WTC11 (cell line): ENCODE measurements at regions of chr6 and their contacts with region 1.

Region 1: GRCh38 chr6:31366693-31367470 is 9.9 kb upstream of the HLA-B start:
- DNase-seq: peak; percentile 91
- ATAC-seq: peak; percentile 96
- H3K4me3 Mint-ChIP-seq: peak overlapping the region; percentile 63
- H3K27ac Mint-ChIP-seq: no peak overlapping the region
- H3K4me1 Mint-ChIP-seq: peaks cover 4% of the 10 kb centered on the region; the same call in 1 of the 2 replicates
- H3K27me3 Mint-ChIP-seq: peaks cover 72% of the 10 kb centered on the region
- CTCF ChIP-seq: peak; percentile 88

Region 2: GRCh38 chr6:31197559-31198305 is 169.2 kb before region 1 on chr6:
- CTCF ChIA-PET with region 1: interaction called, 60 read pairs
- POLR2A ChIA-PET with region 1: no interaction called
- DNase-seq: peak; percentile 70
- ATAC-seq: peak; percentile 42
- H3K4me3 Mint-ChIP-seq: peak overlapping the region; percentile 83
- H3K27ac Mint-ChIP-seq: no peak overlapping the region
- H3K4me1 Mint-ChIP-seq: peaks cover 6% of the 10 kb centered on the region
- H3K27me3 Mint-ChIP-seq: no peaks in the 10 kb centered on the region; the same call in 1 of the 2 replicates
- CTCF ChIP-seq: no peak

Region 3: DNA sequence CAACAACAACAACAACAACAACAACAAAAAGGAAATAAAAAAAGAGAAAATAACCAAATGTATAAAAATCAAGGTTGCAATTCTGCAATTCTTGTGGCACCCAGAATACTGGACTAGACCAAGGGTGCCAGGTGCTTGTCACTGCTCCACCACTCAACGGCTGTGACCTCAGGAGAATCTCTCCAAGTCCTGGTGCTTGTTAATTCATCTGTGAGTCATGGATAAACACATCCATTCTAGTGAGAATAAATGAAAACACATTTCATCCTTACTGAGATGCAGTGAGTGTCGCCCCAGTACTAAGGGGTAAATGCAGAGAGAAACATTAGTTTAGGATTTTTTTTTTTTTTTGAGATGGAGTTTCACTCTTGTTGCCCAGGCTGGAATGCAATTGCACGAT is 127.0 kb before region 1 on chr6:
- CTCF ChIA-PET with region 1: interaction called, 12 read pairs
- POLR2A ChIA-PET with region 1: no interaction called
- DNase-seq: no peak
- ATAC-seq: no peak
- H3K4me3 Mint-ChIP-seq: no peak overlapping the region
- H3K27ac Mint-ChIP-seq: no peak overlapping the region
- H3K4me1 Mint-ChIP-seq: no peaks in the 10 kb centered on the region
- H3K27me3 Mint-ChIP-seq: peaks cover 8% of the 10 kb centered on the region
- CTCF ChIP-seq: no peak

Region 4: GRCh38 chr6:31293343-31293742 is 73.5 kb before region 1 on chr6:
- CTCF ChIA-PET with region 1: interaction called, 10 read pairs
- POLR2A ChIA-PET with region 1: no interaction called
- DNase-seq: no peak
- ATAC-seq: no peak
- H3K4me3 Mint-ChIP-seq: no peak overlapping the region
- H3K27ac Mint-ChIP-seq: no peak overlapping the region
- H3K4me1 Mint-ChIP-seq: no peaks in the 10 kb centered on the region
- H3K27me3 Mint-ChIP-seq: peaks cover 32% of the 10 kb centered on the region
- CTCF ChIP-seq: no peak

Region 5: GRCh38 chr6:31345026-31345730 is 21.7 kb before region 1 on chr6:
- CTCF ChIA-PET with region 1: interaction called, 11 read pairs
- POLR2A ChIA-PET with region 1: no interaction called
- DNase-seq: no peak
- ATAC-seq: peak; percentile 41; the same call in 1 of the 2 replicates
- H3K4me3 Mint-ChIP-seq: no peak overlapping the region
- H3K27ac Mint-ChIP-seq: no peak overlapping the region
- H3K4me1 Mint-ChIP-seq: peaks cover 22% of the 10 kb centered on the region
- H3K27me3 Mint-ChIP-seq: peaks cover 12% of the 10 kb centered on the region
- CTCF ChIP-seq: no peak

Region 6: DNA sequence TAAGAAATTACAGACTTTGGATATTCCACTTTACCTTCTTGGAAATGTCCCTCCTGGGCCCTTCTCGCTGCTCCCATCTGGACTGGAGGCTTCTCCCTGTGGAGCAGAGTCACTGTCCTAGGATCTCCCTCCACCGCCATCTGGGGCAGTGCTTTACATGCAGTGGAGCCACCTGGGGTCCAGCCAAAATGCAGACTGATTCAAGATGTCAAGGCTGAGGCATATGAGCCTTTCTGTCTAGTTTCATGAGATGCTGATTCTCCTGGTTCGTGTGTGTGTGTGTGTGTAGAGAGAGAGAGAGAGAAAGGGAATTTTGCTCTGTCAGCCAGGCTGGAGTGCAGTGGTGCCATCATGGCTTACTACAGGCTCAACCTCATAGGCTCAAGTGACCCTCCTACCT is 51.4 kb after region 1 on chr6:
- CTCF ChIA-PET with region 1: no interaction called
- POLR2A ChIA-PET with region 1: no interaction called
- DNase-seq: no peak
- ATAC-seq: no peak
- H3K4me3 Mint-ChIP-seq: no peak overlapping the region
- H3K27ac Mint-ChIP-seq: no peak overlapping the region
- H3K4me1 Mint-ChIP-seq: no peaks in the 10 kb centered on the region
- H3K27me3 Mint-ChIP-seq: no peaks in the 10 kb centered on the region
- CTCF ChIP-seq: no peak